K562 (cell line): ENCODE measurements at regions of chr18 and their contacts with region 1.

Region 1: DNA sequence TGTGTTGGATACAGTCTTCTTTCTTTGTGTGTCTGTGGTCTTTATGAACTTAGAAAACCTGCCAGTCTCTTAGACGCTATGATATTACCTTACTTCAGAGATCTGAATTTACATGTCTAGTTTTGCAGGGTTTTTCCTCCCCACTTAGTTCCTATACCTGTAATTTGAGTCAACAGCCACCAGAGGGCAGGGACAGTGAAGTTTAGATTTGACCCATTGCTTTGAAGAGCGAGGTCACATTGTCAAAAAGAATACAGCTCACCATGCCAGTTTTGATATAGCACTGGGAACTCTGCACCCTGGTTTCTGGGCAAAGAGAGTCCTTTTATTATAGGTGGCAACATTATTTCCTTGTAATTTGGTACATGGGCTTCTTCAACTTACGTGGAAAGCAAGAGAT is 102.3 kb downstream of the MAPK4 start:
- DNase-seq: peak; percentile 23 to 39 (median 32)
- ATAC-seq: no peak
- H3K4me3 ChIP-seq: no peak overlapping the region
- H3K27ac ChIP-seq: no peak overlapping the region
- H3K4me1 ChIP-seq: no peaks in the 10 kb centered on the region
- H3K27me3 ChIP-seq: peaks cover 0 to 9% of the 10 kb centered on the region in 2 experiments; a peak in 2 of 5 replicates
- CTCF ChIP-seq: peak; percentile 39 to 57 (median 55); a peak in 5 of 6 replicates
- EP300 ChIP-seq: no peak
- POLR2A ChIP-seq: no peak
- RAD21 ChIP-seq: peak; percentile 43 to 56

Region 2: DNA sequence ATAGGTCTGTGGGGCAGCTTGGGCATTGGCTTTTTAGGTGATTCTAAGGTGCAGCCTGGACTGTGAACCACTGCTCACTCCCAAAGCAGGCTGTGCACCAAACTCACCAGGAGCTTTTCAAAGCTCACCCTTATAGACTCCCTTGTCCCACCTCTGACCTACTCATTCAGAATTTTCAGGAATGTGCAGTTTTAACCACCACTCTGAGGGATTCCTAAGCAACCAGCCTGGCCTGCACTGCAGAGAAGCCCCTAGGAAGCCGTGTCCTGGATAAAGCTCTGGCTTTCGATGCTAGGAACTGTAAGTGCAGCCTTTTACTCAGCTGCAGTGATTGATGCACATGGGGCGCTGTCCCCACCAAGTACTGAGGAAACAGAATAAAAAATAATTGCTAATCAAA is 124.7 kb after region 1 on chr18:
- CTCF ChIA-PET with region 1: no interaction called
- POLR2A ChIA-PET with region 1: no interaction called
- in situ Hi-C with region 1: no loop called
- intact Hi-C with region 1: loop called (anchors 1 kb)
- DNase-seq: no peak
- ATAC-seq: no peak
- H3K4me3 ChIP-seq: no peak overlapping the region
- H3K27ac ChIP-seq: no peak overlapping the region
- H3K4me1 ChIP-seq: no peaks in the 10 kb centered on the region
- H3K27me3 ChIP-seq: peaks cover 0 to 4% of the 10 kb centered on the region in 2 experiments; a peak in 2 of 5 replicates
- CTCF ChIP-seq: no peak
- EP300 ChIP-seq: no peak
- POLR2A ChIP-seq: no peak
- RAD21 ChIP-seq: no peak